Endothelial cell of umbilical vein (primary cell): ENCODE measurements at regions of chr1 and their contacts with region 1.

Region 1: DNA sequence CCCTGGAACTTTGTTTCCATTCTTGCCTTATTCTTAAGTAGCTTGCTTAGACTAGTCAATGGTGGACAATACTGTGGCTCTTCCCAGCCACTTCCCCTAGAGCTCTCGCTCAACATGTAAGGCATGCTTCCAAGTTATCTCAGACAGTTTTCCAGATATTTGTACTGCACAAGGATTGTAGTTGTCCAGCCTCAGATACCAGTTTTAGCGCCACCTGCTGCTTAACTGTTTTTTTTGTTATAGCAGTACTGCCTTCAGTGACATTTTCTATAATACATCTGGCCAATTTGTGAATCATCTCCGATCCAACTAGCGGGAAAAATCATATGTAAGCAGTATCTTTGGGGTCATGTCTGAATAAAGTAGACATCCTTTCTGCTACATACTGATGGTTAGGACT is 346.7 kb upstream of the ADGRL4 start:
- DNase-seq: peak; percentile 67
- H3K4me3 ChIP-seq: no peak overlapping the region
- H3K27ac ChIP-seq: no peak overlapping the region
- H3K4me1 ChIP-seq: no peaks in the 10 kb centered on the region
- H3K27me3 ChIP-seq: no peaks in the 10 kb centered on the region
- CTCF ChIP-seq: peak; percentile 42 to 47
- POLR2A ChIP-seq: no peak

Region 2: GRCh38 chr1:78607334-78607927 is 745.8 kb before region 1 on chr1:
- CTCF ChIA-PET with region 1: no interaction called
- POLR2A ChIA-PET with region 1: no interaction called
- dilution Hi-C with region 1: no loop called
- intact Hi-C with region 1: no loop called
- DNase-seq: peak; percentile 39
- H3K4me3 ChIP-seq: no peak overlapping the region
- H3K27ac ChIP-seq: no peak overlapping the region
- H3K4me1 ChIP-seq: no peaks in the 10 kb centered on the region
- H3K27me3 ChIP-seq: peaks cover 0 to 2% of the 10 kb centered on the region in 2 experiments
- CTCF ChIP-seq: peak; percentile 26 to 37
- POLR2A ChIP-seq: no peak

Region 3: GRCh38 chr1:78688701-78689100 is 664.5 kb before region 1 on chr1:
- CTCF ChIA-PET with region 1: interaction called, 5 read pairs
- POLR2A ChIA-PET with region 1: no interaction called
- dilution Hi-C with region 1: no loop called
- intact Hi-C with region 1: loop called (anchors 5 kb)
- DNase-seq: peak; percentile 56
- H3K4me3 ChIP-seq: no peak overlapping the region
- H3K27ac ChIP-seq: no peak overlapping the region
- H3K4me1 ChIP-seq: peaks cover 2% of the 10 kb centered on the region
- H3K27me3 ChIP-seq: no peaks in the 10 kb centered on the region
- CTCF ChIP-seq: no peak
- POLR2A ChIP-seq: no peak

Region 4: DNA sequence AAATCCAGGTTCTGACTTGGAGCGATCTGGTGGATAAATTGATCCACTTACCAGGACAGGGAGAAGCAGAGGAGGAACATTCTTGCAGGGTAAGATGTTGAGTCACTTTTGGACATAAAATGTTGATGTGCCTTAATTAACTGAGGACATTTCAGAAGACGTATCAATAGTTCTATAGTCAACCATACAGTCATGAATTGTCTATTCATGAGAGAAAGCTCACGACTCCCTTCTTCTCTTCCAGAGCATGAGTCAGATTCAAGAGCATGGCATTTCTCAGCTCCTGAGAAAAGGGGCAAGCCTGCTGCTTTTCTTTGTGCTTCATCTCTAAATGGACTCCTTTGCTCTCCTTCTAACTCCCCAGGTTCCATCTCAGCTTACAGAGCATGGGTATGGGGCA is 402.4 kb before region 1 on chr1:
- CTCF ChIA-PET with region 1: no interaction called
- POLR2A ChIA-PET with region 1: no interaction called
- dilution Hi-C with region 1: no loop called
- intact Hi-C with region 1: loop called (anchors 10 kb)
- DNase-seq: no peak
- H3K4me3 ChIP-seq: no peak overlapping the region
- H3K27ac ChIP-seq: no peak overlapping the region
- H3K4me1 ChIP-seq: peaks cover 2% of the 10 kb centered on the region
- H3K27me3 ChIP-seq: no peaks in the 10 kb centered on the region
- CTCF ChIP-seq: no peak
- POLR2A ChIP-seq: no peak

Region 5: GRCh38 chr1:79259388-79260336 is 93.6 kb before region 1 on chr1:
- CTCF ChIA-PET with region 1: interaction called, 18 read pairs
- POLR2A ChIA-PET with region 1: no interaction called
- dilution Hi-C with region 1: no loop called
- intact Hi-C with region 1: loop called (anchors 1 kb)
- DNase-seq: peak; percentile 44
- H3K4me3 ChIP-seq: no peak overlapping the region
- H3K27ac ChIP-seq: no peak overlapping the region
- H3K4me1 ChIP-seq: no peaks in the 10 kb centered on the region
- H3K27me3 ChIP-seq: no peaks in the 10 kb centered on the region
- CTCF ChIP-seq: peak; percentile 27 to 42
- POLR2A ChIP-seq: no peak

Region 6: DNA sequence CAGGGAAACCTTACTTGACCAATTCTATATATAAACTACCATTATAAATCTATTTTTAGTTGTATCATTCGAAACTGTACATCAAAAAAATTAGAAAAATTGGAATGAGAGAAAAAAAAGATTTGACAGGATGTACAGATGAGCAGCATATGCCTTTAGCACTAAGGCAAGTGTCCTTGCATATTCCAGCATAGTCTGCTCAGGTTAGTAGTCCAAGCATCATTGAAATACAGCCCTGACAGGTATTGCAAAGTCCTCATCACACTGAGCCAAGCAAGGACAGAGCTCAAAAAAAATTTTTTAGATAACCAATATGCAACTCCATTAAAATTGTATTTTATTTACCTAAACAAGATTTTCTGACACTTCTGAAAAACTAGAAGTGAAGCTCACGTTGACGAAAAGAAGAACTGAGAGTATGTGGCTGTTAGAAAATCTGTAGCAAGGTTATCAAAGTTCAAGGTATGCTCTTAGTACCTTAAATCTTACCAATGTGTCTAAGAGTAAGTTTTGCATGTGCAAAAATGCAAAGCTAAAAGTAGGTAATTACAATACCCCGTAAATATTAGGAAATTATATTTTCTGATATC is 118.9 kb after region 1 on chr1:
- CTCF ChIA-PET with region 1: no interaction called
- POLR2A ChIA-PET with region 1: no interaction called
- dilution Hi-C with region 1: no loop called
- intact Hi-C with region 1: no loop called
- DNase-seq: no peak
- H3K4me3 ChIP-seq: no peak overlapping the region
- H3K27ac ChIP-seq: no peak overlapping the region
- H3K4me1 ChIP-seq: no peaks in the 10 kb centered on the region
- H3K27me3 ChIP-seq: no peaks in the 10 kb centered on the region
- CTCF ChIP-seq: no peak
- POLR2A ChIP-seq: no peak